ENCODE measurements at regions of chr1 and their contacts with region 1.

Region 1: DNA sequence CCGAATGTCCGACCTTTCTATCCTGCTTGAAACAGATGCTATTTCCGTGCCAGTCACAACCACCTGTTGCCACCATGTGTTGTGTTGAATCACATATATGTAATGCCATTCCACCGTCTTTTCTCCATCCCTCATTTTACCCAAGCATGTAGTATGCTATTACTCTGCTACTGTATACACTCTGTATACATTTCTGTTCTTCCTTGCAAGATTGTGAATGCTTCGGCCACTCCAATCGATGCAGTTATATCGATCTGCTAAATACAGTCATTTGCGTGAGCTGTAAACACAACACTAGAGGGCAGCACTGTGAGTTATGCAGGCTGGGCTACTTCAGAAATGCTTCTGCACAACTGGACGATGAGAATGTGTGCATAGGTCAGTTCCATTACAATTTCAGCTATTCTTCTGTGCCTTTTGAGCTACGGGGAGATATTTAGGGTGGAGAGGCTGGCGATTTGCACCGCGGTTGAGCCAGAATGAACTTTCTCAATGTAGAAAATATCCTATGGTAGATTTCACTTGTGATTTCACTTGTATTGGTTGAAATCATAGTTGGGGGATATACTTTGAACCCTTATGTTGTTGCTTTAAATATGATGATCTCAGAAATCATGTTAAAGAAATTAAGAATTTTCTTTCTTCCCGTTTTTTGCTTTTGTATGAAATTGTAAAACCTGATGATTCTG is 289.8 kb downstream of the NTNG1 start:
- DNase-seq: no peak
- H3K4me3 Mint-ChIP-seq: no peak overlapping the region
- H3K27ac Mint-ChIP-seq: no peak overlapping the region
- H3K4me1 Mint-ChIP-seq: no peaks in the 10 kb centered on the region
- H3K27me3 Mint-ChIP-seq: peaks cover 2% of the 10 kb centered on the region

Region 2: DNA sequence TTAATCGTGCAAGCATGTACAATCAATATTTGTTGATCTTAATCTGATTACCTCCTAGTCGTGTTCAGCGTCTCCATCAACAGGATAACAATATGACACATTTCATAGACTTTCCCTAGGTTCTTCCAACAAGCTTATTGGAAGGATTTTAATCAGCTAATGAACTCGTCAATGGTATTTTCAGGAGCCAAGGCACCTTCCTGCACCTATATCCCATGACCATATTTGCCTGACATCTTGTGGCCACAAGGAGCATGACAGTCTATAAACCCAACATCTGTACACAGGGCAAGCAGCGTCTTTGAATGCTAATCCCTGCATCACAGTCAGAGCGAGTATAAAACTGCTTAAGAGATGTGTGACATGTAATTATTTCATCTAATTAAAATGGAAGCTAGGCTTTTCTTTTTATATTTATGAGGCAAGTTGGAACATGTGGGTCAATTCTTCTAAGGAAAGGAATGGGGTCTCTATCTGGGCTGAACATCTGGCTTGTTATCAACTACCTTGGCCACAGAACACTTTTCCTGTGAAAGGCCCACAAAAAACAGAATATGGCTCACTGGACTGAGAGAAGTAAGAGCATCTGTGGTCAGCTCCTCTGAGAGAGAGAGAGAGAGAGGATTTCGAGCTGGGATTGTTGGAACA is 98.9 kb after region 1 on chr1:
- intact Hi-C with region 1: loop called (anchors 1 kb)
- DNase-seq: no peak
- H3K4me3 Mint-ChIP-seq: no peak overlapping the region
- H3K27ac Mint-ChIP-seq: no peak overlapping the region
- H3K4me1 Mint-ChIP-seq: peaks cover 6% of the 10 kb centered on the region
- H3K27me3 Mint-ChIP-seq: no peaks in the 10 kb centered on the region

Region 3: DNA sequence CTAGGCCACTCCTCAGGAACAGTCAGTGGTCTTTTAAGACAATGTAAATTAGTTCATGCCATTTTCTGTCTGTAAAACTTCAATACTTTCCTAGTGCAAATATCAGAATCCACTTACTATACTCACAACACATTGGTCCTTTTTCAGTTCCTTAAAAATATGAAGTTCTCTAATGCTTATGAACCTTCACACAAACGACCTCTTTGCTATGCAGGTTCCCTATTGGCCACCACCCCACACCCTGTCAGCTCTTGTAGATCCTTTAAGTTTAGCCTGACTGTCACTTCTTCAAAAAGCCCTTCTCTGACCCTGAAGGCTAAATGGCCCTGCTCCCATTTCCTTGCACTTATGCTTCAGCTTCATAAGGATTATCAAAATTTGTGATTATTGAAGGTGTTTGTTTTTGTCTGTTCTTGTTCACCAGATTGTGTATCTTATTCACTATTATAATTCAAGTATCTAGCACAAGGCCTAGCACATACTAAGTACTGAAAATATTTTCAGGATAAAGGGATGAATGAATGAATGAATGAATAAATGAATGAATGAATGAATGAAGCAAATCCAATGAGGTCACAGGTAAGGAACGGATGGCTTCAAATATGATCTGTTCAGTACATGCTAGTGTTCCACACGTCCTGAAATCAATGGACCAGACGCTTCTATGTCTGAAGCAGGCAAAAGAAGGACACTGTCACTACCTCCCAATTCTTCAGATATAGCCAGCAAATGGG is 160.4 kb after region 1 on chr1:
- intact Hi-C with region 1: no loop called
- DNase-seq: no peak
- H3K4me3 Mint-ChIP-seq: no peak overlapping the region
- H3K27ac Mint-ChIP-seq: no peak overlapping the region
- H3K4me1 Mint-ChIP-seq: peaks cover 12% of the 10 kb centered on the region
- H3K27me3 Mint-ChIP-seq: no peaks in the 10 kb centered on the region

Region 4: DNA sequence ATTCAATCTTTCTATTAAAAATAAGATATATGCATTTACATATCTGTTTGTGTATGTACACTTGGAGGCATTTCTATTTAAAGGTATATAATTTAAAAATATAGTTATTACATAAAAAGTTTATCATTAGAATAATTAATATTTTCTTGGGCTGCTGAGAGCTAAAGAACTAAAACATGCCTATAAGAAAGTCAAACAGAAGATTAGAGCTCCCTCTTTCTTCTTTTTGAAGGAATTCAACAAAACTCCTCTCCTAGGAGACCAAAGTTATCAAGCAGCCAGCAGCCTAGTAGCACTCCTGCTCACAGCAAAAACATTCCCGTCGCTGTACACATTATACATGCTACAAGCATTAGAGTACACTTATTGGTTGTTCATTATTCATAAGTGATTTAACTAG is 317.8 kb after region 1 on chr1:
- intact Hi-C with region 1: loop called (anchors 2 kb)
- DNase-seq: no peak
- H3K4me3 Mint-ChIP-seq: no peak overlapping the region
- H3K27ac Mint-ChIP-seq: no peak overlapping the region
- H3K4me1 Mint-ChIP-seq: no peaks in the 10 kb centered on the region
- H3K27me3 Mint-ChIP-seq: no peaks in the 10 kb centered on the region

Measured in activated T-helper 2 cell treated with anti-CD3 and anti-CD28 coated beads, Interferon-gamma antibody, Interleukin-2, Interleukin-4, amounts not matched to agents 10 μg/mL and 5 μg/mL and 100 μg/mL, durations not matched to agents 14 hours and 24 hours and 36 hours (primary cell).